Activated B cell treated with CpG ODN at 0.5 μM for 24 hours (primary cell): ENCODE measurements at regions of chr5 and their contacts with region 1.

Region 1: GRCh38 chr5:54774281-54775170 is 210.9 kb downstream of the ESM1 start:
- DNase-seq: no peak
- ATAC-seq: peak; percentile 16
- H3K4me3 Mint-ChIP-seq: no peak overlapping the region
- H3K27ac Mint-ChIP-seq: no peak overlapping the region
- H3K4me1 Mint-ChIP-seq: peaks cover 62% of the 10 kb centered on the region
- H3K27me3 Mint-ChIP-seq: no peaks in the 10 kb centered on the region
- CTCF ChIP-seq: no peak

Region 2: GRCh38 chr5:54610197-54610944 is 164.2 kb before region 1 on chr5:
- CTCF ChIA-PET with region 1: no interaction called
- POLR2A ChIA-PET with region 1: no interaction called
- intact Hi-C with region 1: loop called (anchors 2 kb)
- DNase-seq: no peak
- ATAC-seq: peak; percentile 94
- H3K4me3 Mint-ChIP-seq: peak overlapping the region; percentile 55
- H3K27ac Mint-ChIP-seq: peak overlapping the region; percentile 71
- H3K4me1 Mint-ChIP-seq: peaks cover 50% of the 10 kb centered on the region
- H3K27me3 Mint-ChIP-seq: no peaks in the 10 kb centered on the region
- CTCF ChIP-seq: no peak

Region 3: GRCh38 chr5:54753034-54753433 is 21.5 kb before region 1 on chr5:
- CTCF ChIA-PET with region 1: no interaction called
- POLR2A ChIA-PET with region 1: interaction called, 14 read pairs
- intact Hi-C with region 1: loop called (anchors 1 kb)
- DNase-seq: no peak
- ATAC-seq: peak; percentile 90
- H3K4me3 Mint-ChIP-seq: peak overlapping the region; percentile 72
- H3K27ac Mint-ChIP-seq: peak overlapping the region; percentile 81
- H3K4me1 Mint-ChIP-seq: peaks cover 60% of the 10 kb centered on the region
- H3K27me3 Mint-ChIP-seq: no peaks in the 10 kb centered on the region
- CTCF ChIP-seq: no peak

Region 4: GRCh38 chr5:54785729-54786591 is 11.4 kb after region 1 on chr5:
- CTCF ChIA-PET with region 1: no interaction called
- POLR2A ChIA-PET with region 1: interaction called, 16 read pairs
- intact Hi-C with region 1: loop called (anchors 1 kb)
- DNase-seq: peak; percentile 47
- ATAC-seq: peak; percentile 90
- H3K4me3 Mint-ChIP-seq: no peak overlapping the region
- H3K27ac Mint-ChIP-seq: peak overlapping the region; percentile 88
- H3K4me1 Mint-ChIP-seq: peaks cover 32% of the 10 kb centered on the region
- H3K27me3 Mint-ChIP-seq: no peaks in the 10 kb centered on the region
- CTCF ChIP-seq: no peak

Region 5: DNA sequence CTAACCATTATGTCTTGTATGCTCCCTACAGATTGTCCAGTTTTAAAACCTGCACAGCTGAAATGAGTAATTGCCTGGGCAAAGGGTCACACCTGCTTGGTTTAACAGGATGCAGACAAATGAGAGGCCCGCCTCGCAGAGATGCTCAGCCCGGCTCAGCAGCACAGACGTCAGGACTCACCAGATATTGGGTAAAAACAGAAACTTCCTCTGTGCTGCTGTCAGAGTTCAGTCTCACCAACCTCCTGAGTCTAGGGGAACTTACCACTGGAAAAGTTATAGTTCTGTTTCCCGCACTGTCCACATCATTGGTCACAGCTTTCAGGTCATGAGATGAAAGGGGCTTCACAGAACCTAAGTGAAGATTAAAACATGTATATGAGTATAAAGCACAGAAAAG is 58.3 kb after region 1 on chr5:
- CTCF ChIA-PET with region 1: no interaction called
- POLR2A ChIA-PET with region 1: no interaction called
- intact Hi-C with region 1: loop called (anchors 5 kb)
- DNase-seq: no peak
- ATAC-seq: peak; percentile 89
- H3K4me3 Mint-ChIP-seq: peak overlapping the region; percentile 41
- H3K27ac Mint-ChIP-seq: peak overlapping the region; percentile 77
- H3K4me1 Mint-ChIP-seq: peaks cover 42% of the 10 kb centered on the region
- H3K27me3 Mint-ChIP-seq: no peaks in the 10 kb centered on the region
- CTCF ChIP-seq: no peak

Region 6: DNA sequence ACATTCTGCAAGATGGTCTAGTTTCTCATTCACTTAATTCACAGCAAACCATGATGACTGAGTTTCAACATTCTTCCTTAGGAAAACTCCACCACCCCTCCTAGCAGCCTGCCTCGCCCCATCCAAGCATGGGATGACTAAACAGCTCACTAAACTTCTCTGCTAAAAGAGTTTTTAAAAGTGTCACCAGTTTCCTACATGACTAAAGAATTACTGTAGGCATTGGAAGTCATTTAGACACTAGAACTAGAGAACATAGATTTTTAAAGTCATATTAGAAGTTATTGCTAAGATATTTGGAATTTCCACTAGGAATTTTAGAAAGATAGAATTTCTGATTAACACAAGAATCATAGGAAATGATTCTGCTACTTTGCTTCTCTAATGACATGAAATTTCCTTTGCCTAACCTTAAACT is 216.3 kb after region 1 on chr5:
- CTCF ChIA-PET with region 1: no interaction called
- POLR2A ChIA-PET with region 1: no interaction called
- intact Hi-C with region 1: no loop called
- DNase-seq: no peak
- ATAC-seq: no peak
- H3K4me3 Mint-ChIP-seq: no peak overlapping the region
- H3K27ac Mint-ChIP-seq: no peak overlapping the region
- H3K4me1 Mint-ChIP-seq: no peaks in the 10 kb centered on the region
- H3K27me3 Mint-ChIP-seq: peaks cover 9% of the 10 kb centered on the region
- CTCF ChIP-seq: no peak